HepG2 (cell line): ENCODE measurements at regions of chr19 and their contacts with region 1.

Region 1: GRCh38 chr19:45862564-45863334 is at the start of gene SYMPK:
- DNase-seq: peak; percentile 98
- ATAC-seq: peak; percentile 93
- H3K4me3 ChIP-seq: peak within 1 kb of the TSS; percentile 92 to 97 (median 93)
- H3K27ac ChIP-seq: peak within 1 kb of the TSS; percentile 71
- H3K4me1 ChIP-seq: peaks cover 38% of the 10 kb centered on the region
- H3K27me3 ChIP-seq: no peaks in the 10 kb centered on the region; a peak in 1 of 5 replicates
- CTCF ChIP-seq: peak; percentile 30; the same call in 1 of the 2 replicates
- EP300 ChIP-seq: no peak
- POLR2A ChIP-seq: peak in 1 of 2 experiments; percentile 59; a peak in 3 of 4 replicates
- RAD21 ChIP-seq: no peak
- total RNA-seq, gene SYMPK: 19.9 and 21.9 TPM in 2 replicates

Region 2: DNA sequence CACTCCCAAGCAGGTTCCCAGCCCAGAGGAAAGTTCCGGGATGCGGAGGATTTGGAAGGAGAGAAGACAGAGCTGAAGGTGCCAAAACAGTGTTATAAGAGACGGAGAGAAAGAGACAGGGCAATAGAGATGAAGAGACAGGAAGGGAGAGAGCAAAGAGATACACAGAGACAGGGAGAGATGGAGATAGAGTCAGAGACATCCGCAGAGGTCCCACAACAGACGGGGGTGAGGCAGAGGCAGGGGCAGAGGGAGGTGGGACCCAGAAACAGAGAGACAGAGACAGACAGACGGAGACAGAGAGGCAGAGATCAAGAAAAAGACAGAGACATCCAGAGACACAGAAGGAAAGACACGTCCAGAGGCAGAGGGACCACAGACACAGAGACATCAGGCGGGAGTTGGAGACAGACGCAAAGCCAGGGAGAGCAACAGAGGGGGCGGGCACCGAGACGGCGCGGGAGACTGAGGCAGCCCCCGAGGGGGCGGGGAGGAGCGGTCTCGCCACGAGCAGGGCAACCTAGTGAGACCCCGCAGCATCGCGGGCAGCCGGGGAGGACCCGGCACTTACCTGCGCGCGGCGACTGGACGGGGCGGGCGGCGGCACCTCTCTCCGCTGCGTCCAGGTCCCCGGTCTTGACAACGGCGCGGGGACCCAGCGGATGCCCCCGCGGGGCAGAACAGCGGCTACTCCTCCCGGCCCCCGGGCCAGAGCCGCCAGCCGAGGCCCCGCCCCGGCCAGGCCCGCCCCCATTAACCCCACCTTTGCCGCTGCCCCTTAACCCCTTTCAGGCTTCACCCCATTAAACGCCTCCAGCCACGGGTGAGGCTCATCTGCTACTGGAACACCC is 261.0 kb before region 1 on chr19 and contains the start of gene GPR4:
- CTCF ChIA-PET with region 1: no interaction called
- POLR2A ChIA-PET with region 1: no interaction called
- in situ Hi-C with region 1: no loop called
- intact Hi-C with region 1: no loop called
- DNase-seq: no peak
- ATAC-seq: peak; percentile 83
- H3K4me3 ChIP-seq: peak within 1 kb of the TSS in 1 of 3 experiments; percentile 40; a peak in 1 of 6 replicates
- H3K27ac ChIP-seq: no peak within 1 kb of the TSS
- H3K4me1 ChIP-seq: peaks cover 2% of the 10 kb centered on the region; the same call in 1 of the 2 replicates
- H3K27me3 ChIP-seq: peaks cover 7 to 55% of the 10 kb centered on the region in 2 experiments
- CTCF ChIP-seq: no peak
- EP300 ChIP-seq: no peak
- POLR2A ChIP-seq: no peak
- RAD21 ChIP-seq: no peak
- total RNA-seq, gene GPR4: not detected in 2 replicates

Region 3: GRCh38 chr19:45817010-45817724 is 45.6 kb before region 1 on chr19:
- CTCF ChIA-PET with region 1: interaction called, 4 read pairs
- POLR2A ChIA-PET with region 1: interaction called, 15 read pairs
- in situ Hi-C with region 1: no loop called
- intact Hi-C with region 1: loop called (anchors 1 kb)
- DNase-seq: peak; percentile 87
- ATAC-seq: peak; percentile 87
- H3K4me3 ChIP-seq: no peak overlapping the region
- H3K27ac ChIP-seq: no peak overlapping the region
- H3K4me1 ChIP-seq: no peaks in the 10 kb centered on the region
- H3K27me3 ChIP-seq: no peaks in the 10 kb centered on the region
- CTCF ChIP-seq: peak; percentile 95
- EP300 ChIP-seq: no peak
- POLR2A ChIP-seq: no peak
- RAD21 ChIP-seq: peak; percentile 80

Region 4: GRCh38 chr19:45876411-45877197 is 13.9 kb after region 1 on chr19:
- CTCF ChIA-PET with region 1: interaction called, 263 read pairs
- POLR2A ChIA-PET with region 1: interaction called, 388 read pairs
- in situ Hi-C with region 1: no loop called
- intact Hi-C with region 1: loop called (anchors 1 kb)
- DNase-seq: peak; percentile 77
- ATAC-seq: peak; percentile 60
- H3K4me3 ChIP-seq: peak overlapping the region; percentile 43 to 69 (median 51)
- H3K27ac ChIP-seq: peak overlapping the region; percentile 94
- H3K4me1 ChIP-seq: peaks cover 95% of the 10 kb centered on the region
- H3K27me3 ChIP-seq: no peaks in the 10 kb centered on the region
- CTCF ChIP-seq: peak; percentile 25; the same call in 1 of the 2 replicates
- EP300 ChIP-seq: peak in 1 of 2 experiments; percentile 53; a peak in 1 of 4 replicates
- POLR2A ChIP-seq: peak in 1 of 2 experiments; percentile 56; a peak in 2 of 4 replicates
- RAD21 ChIP-seq: peak; percentile 17; the same call in 1 of the 2 replicates

Region 5: GRCh38 chr19:45886427-45887199 is 23.9 kb after region 1 on chr19:
- CTCF ChIA-PET with region 1: interaction called, 263 read pairs
- POLR2A ChIA-PET with region 1: interaction called, 388 read pairs
- in situ Hi-C with region 1: no loop called
- intact Hi-C with region 1: loop called (anchors 1 kb)
- DNase-seq: peak; percentile 88
- ATAC-seq: peak; percentile 46
- H3K4me3 ChIP-seq: peak overlapping the region; percentile 69 to 91 (median 80)
- H3K27ac ChIP-seq: peak overlapping the region; percentile 78
- H3K4me1 ChIP-seq: peaks cover 30% of the 10 kb centered on the region
- H3K27me3 ChIP-seq: no peaks in the 10 kb centered on the region
- CTCF ChIP-seq: no peak
- EP300 ChIP-seq: no peak
- POLR2A ChIP-seq: peak in 1 of 2 experiments; percentile 61; a peak in 3 of 4 replicates
- RAD21 ChIP-seq: no peak

Region 6: DNA sequence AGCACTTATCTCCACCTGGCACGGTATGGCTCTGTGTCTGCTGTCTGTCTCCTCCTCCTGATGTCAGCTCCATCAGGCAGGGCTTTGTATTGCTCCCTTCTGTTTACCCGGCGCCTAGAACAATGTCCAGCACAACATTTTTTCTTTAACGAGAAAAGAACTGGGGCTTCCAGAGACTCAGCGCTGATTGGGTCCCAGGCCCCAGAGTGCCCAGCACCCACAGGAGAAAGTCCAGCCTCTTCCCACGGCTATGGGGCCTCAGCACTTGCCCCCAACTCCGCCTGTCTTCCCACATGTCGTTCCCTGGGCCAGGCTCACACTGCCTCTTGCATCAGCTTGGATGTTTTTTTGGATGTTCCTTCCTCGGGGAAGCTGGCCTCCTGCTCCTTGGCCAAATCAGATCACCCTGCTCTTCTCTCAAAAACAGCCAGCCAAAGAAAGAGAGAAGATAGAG is 32.8 kb after region 1 on chr19:
- CTCF ChIA-PET with region 1: no interaction called
- POLR2A ChIA-PET with region 1: interaction called, 24 read pairs
- in situ Hi-C with region 1: no loop called
- intact Hi-C with region 1: no loop called
- DNase-seq: peak; percentile 87
- ATAC-seq: peak; percentile 93
- H3K4me3 ChIP-seq: peak overlapping the region in 1 of 3 experiments; percentile 45; a peak in 2 of 6 replicates
- H3K27ac ChIP-seq: peak overlapping the region; percentile 79
- H3K4me1 ChIP-seq: peaks cover 43% of the 10 kb centered on the region
- H3K27me3 ChIP-seq: no peaks in the 10 kb centered on the region
- CTCF ChIP-seq: no peak
- EP300 ChIP-seq: peak in 1 of 2 experiments; percentile 45; a peak in 2 of 4 replicates
- POLR2A ChIP-seq: peak; percentile 61 to 70; a peak in 2 of 4 replicates
- RAD21 ChIP-seq: no peak

Region 7: DNA sequence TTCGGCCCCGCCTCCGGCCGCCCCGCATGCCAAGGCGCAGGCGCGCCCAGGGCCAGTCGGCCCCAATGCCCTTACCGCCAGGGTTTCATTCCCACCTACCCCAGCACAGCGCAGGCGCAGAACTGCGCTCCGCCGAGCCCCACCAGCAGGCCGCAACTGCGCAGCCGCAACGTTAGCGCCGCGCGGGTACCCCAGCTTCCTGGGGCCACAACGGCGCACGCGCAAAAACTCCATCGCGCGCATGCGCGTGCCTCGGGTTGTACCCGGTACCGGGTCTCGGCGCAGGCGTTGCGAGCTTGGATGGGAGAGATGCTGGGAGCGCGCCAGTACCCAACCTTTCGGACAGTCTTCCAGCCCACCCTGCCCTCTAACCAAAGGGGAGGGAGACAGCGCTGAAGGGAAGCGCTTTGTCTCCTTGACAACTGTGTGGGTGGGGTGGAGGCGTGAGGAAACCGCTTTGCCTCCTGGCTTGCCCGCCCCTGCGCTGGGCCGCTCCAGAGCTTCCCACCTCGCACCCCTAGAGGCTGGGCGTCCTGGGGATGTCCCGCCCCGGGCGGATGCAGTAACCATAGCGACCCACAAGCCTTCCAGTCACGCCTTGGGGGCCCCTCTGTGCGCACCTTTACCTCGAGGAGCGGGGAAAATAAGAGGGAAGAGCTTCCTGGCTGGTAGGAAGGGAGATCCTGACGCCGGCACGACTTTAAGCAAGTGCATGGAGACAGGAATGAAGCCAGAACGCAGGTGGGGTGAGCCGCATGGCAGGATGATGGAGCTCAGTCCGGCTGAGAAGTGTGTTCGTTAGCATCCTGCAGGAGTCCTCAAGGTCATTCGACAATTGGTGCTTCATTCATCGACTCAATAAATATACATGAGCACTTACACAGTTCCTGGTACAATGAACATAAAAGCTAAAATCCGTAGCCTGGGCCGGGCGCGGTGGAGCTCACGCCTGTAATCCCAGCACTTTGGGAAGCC is 40.2 kb after region 1 on chr19:
- CTCF ChIA-PET with region 1: no interaction called
- POLR2A ChIA-PET with region 1: interaction called, 24 read pairs
- in situ Hi-C with region 1: no loop called
- intact Hi-C with region 1: no loop called
- DNase-seq: peak; percentile 94
- ATAC-seq: peak; percentile 85
- H3K4me3 ChIP-seq: peak overlapping the region; percentile 50 to 83 (median 66)
- H3K27ac ChIP-seq: peak overlapping the region; percentile 42
- H3K4me1 ChIP-seq: peaks cover 40% of the 10 kb centered on the region
- H3K27me3 ChIP-seq: peaks cover 0 to 3% of the 10 kb centered on the region in 2 experiments; a peak in 2 of 5 replicates
- CTCF ChIP-seq: peak; percentile 17; the same call in 1 of the 2 replicates
- EP300 ChIP-seq: no peak
- POLR2A ChIP-seq: peak; percentile 21 to 70; a peak in 2 of 4 replicates
- RAD21 ChIP-seq: peak; percentile 43; the same call in 1 of the 2 replicates